Mammary epithelial cell (primary cell): ENCODE measurements at regions of chr17 and their contacts with region 1.

Region 1: DNA sequence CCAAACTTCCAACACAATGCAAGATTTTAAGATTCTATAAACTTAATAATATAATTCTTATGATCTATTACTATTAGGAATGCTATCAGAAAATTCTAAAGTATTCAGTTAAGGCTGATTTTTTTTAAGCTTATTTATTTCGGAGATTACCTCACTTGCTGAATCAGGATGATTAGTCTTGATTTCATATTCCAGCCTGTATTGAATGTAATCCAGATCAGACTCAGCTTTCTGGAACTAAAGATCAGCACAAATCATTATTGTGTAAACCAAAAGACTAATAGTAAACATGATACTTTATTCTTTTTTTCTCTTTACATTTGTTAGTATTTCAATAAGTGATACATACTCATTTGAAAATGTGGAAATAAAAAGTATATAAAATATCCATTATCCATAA is 23.9 kb downstream of the SKA2 start:
- DNase-seq: no peak
- H3K4me3 ChIP-seq: no peak overlapping the region
- H3K27ac ChIP-seq: no peak overlapping the region
- H3K4me1 ChIP-seq: no peaks in the 10 kb centered on the region
- H3K27me3 ChIP-seq: no peaks in the 10 kb centered on the region
- CTCF ChIP-seq: no peak

Region 2: DNA sequence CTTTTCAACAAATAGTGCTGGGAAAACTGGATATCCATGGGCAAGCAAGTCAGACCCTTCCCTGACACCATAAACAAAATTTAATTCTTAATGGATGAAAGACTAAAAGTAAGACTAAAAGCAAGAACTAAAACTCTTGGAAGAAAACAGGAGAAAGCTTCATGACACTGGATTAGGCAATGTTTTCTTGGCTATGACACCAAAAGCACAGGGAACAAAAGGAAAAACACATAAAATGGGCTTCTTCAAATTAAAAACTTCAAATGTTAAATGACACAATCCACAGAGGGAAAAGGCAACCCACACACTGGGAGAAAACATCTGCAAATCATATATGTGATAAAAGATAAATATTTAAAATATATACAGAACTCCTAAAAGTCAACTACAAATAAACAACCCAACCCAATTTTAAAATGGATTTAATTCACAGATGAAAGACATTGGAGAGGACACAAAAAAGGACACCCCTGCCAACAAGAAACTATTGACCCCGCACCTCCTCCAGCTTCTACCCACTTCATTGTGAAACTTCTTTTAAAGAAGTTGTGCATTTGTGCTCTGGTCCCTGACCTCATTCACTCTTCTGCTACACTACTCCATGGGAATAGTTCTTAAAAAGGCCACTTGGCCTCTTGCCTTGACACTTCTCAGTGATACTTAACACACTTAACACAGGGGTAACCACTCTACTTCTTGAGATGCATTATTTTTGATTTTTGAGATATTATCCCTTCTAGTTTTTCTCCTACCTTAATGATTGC is 104.8 kb before region 1 on chr17:
- CTCF ChIA-PET with region 1: no interaction called
- dilution Hi-C with region 1: no loop called
- in situ Hi-C with region 1: no loop called
- intact Hi-C with region 1: no loop called
- DNase-seq: no peak
- H3K4me3 ChIP-seq: no peak overlapping the region
- H3K27ac ChIP-seq: no peak overlapping the region
- H3K4me1 ChIP-seq: no peaks in the 10 kb centered on the region
- H3K27me3 ChIP-seq: no peaks in the 10 kb centered on the region
- CTCF ChIP-seq: no peak

Region 3: GRCh38 chr17:59190806-59191205 is 59.7 kb after region 1 on chr17:
- CTCF ChIA-PET with region 1: no interaction called
- dilution Hi-C with region 1: loop called (anchors 5 kb)
- in situ Hi-C with region 1: no loop called
- intact Hi-C with region 1: no loop called
- DNase-seq: no peak
- H3K4me3 ChIP-seq: no peak overlapping the region
- H3K27ac ChIP-seq: no peak overlapping the region
- H3K4me1 ChIP-seq: no peaks in the 10 kb centered on the region
- H3K27me3 ChIP-seq: no peaks in the 10 kb centered on the region
- CTCF ChIP-seq: no peak

Region 4: GRCh38 chr17:59347975-59348391 is 216.9 kb after region 1 on chr17:
- CTCF ChIA-PET with region 1: no interaction called
- dilution Hi-C with region 1: no loop called
- in situ Hi-C with region 1: no loop called
- intact Hi-C with region 1: no loop called
- DNase-seq: no peak
- H3K4me3 ChIP-seq: no peak overlapping the region
- H3K27ac ChIP-seq: no peak overlapping the region
- H3K4me1 ChIP-seq: no peaks in the 10 kb centered on the region
- H3K27me3 ChIP-seq: no peaks in the 10 kb centered on the region
- CTCF ChIP-seq: no peak